Ascending aorta (tissue), 2 donors: ENCODE measurements at regions of chr7 and their contacts with region 1.

Region 1: GRCh38 chr7:159030490-159031134 is 114.1 kb downstream of the VIPR2 start:
- DNase-seq: peak in 1 of 2 donors; percentile 81
- H3K4me3 ChIP-seq: peak overlapping the region; percentile 59 to 78
- H3K27ac ChIP-seq: peak overlapping the region; percentile 94 to 96
- H3K4me1 ChIP-seq: peaks cover 0 to 18% of the 10 kb centered on the region in 2 donors
- H3K27me3 ChIP-seq: no peaks in the 10 kb centered on the region
- CTCF ChIP-seq: peak; percentile 48 to 54 (median 49)

Region 2: GRCh38 chr7:159015454-159016410 is 14.9 kb before region 1 on chr7:
- intact Hi-C with region 1: loop called (anchors 1 kb)
- DNase-seq: peak; percentile 25 to 93
- H3K4me3 ChIP-seq: no peak overlapping the region
- H3K27ac ChIP-seq: peak overlapping the region; percentile 91 to 96
- H3K4me1 ChIP-seq: peaks cover 11 to 59% of the 10 kb centered on the region in 2 donors
- H3K27me3 ChIP-seq: no peaks in the 10 kb centered on the region
- CTCF ChIP-seq: peak in 1 of 3 experiments; percentile 6

Region 3: DNA sequence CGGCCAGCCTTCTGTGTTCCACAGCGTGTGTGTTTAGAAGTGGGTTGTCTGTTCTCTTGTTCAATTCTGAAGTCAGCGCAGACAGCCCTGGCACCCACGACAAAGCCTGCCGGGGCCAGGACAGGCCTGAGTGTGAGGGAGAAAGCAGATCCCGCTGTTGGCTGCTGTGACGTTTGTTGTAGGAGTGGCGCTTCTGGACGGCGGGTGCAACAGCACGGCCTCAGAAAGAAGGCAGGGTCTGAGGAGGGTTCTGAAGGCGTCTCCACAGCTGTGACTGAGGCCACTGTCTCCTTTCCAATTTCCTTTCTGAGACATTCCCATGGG is 37.8 kb after region 1 on chr7:
- intact Hi-C with region 1: loop called (anchors 2 kb)
- DNase-seq: peak in 1 of 2 donors; percentile 81
- H3K4me3 ChIP-seq: peak overlapping the region in 1 of 2 donors; percentile 27
- H3K27ac ChIP-seq: peak overlapping the region; percentile 84 to 88
- H3K4me1 ChIP-seq: peaks cover 16 to 27% of the 10 kb centered on the region in 2 donors
- H3K27me3 ChIP-seq: no peaks in the 10 kb centered on the region
- CTCF ChIP-seq: no peak

Region 4: DNA sequence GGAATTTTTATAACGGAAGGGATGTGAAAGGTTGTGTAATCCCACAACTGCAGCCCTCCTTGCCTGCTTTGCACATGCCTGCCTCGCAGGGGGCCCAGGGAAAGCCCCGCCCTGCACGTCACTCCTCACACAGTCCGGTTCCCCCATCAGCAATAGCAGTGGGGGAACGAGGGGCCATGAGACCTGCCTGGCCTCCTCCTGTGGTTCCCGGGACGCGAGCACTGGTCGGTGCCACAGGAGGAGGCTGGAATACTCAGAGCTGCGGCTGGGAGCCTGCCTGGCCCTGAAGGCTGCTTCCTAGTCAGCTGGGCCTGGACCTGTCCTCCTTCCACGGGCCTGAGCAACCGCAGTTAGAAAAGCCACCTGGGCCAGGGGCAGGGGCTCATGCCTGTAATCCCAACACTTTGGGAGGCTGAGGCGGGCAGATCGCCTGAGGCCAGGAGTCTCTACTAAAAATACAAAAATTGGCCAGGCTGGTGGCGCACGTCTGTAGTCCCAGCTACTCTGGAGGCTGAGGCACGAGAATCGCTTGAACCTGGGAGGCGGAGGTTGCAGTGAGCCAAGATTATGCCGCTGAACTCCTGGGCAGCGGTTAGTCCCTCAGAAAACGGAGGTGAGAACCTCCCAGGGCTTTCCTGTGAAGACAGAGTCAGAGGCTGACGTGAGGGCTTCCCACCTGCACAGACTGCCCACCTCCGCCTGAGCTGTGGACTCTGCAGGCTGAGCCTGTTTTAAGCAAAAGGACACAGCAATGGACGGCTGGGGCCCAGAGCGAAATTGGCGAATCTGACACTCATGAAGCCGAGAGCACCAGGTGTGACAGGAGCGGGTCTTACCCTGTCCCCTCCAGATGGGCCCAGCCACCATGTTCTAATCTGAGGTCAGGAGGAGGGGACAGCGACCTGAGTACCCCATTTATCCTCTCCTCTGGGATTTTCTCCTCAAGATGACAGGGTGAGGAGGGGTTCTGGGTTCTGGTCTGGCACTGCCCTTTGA is 61.2 kb after region 1 on chr7:
- intact Hi-C with region 1: loop called (anchors 1 kb)
- DNase-seq: peak in 1 of 2 donors; percentile 66
- H3K4me3 ChIP-seq: no peak overlapping the region
- H3K27ac ChIP-seq: peak overlapping the region; percentile 98 to 99
- H3K4me1 ChIP-seq: peaks cover 28 to 48% of the 10 kb centered on the region in 2 donors
- H3K27me3 ChIP-seq: no peaks in the 10 kb centered on the region
- CTCF ChIP-seq: no peak

Region 5: DNA sequence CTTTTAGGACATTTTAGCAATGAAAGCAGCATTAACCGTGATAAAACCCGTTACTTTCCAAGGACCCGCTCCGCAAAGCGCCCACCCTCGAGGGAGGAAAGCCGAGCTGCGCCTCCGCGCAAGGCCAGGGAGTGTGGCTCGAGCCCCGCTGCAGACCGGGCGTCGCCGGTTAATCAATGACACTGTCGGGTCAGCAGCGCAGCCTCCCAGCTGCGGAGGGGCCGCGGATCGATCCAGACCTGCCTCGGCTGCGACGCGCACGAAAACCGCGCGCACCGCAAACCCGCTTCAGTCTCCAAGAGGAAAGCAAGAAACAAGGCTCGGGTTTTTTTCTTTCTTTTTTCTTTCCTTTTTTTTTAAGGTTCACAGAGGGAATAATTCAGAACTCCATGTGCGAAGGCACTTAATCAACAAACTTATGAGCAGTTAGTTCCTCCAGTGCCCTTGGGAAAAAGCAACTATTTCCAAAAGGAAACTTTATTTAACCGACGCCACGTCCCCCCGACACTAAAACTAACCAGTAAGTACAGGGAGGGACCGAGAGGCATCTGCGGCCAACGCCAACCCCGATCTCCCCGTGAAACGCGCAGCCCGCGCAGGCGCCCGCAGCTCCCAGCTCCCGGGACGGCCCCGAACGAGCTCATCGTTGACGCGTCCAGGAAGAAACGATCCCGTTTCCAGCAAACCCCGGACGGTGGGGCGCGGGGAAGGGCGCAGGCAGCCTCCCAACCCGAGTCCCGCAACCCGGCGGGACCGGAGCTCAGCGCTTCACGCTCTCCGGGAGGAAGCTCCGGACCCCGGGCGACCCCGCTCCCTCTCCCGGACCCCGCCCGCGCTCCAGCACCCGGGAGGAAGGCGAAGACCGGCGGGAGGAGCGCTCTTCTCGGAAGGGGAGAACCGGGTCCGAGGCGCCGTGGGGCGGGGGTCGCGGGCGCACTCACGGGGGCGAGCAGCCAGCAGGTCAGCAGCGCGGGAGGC is 113.5 kb after region 1 on chr7:
- intact Hi-C with region 1: loop called (anchors 5 kb)
- DNase-seq: no peak
- H3K4me3 ChIP-seq: peak overlapping the region; percentile 69 to 85
- H3K27ac ChIP-seq: peak overlapping the region; percentile 30 to 47
- H3K4me1 ChIP-seq: peaks cover 0 to 12% of the 10 kb centered on the region in 2 donors
- H3K27me3 ChIP-seq: no peaks in the 10 kb centered on the region
- CTCF ChIP-seq: no peak

Region 6: GRCh38 chr7:159211540-159212182 is 181.0 kb after region 1 on chr7:
- intact Hi-C with region 1: no loop called
- DNase-seq: no peak
- H3K4me3 ChIP-seq: peak overlapping the region; percentile 20 to 37
- H3K27ac ChIP-seq: peak overlapping the region; percentile 69
- H3K4me1 ChIP-seq: peaks cover 4 to 5% of the 10 kb centered on the region in 2 donors
- H3K27me3 ChIP-seq: no peaks in the 10 kb centered on the region
- CTCF ChIP-seq: no peak

Region 7: GRCh38 chr7:159310457-159311171 is 280.0 kb after region 1 on chr7:
- intact Hi-C with region 1: no loop called
- DNase-seq: no peak
- H3K4me3 ChIP-seq: no peak overlapping the region
- H3K27ac ChIP-seq: no peak overlapping the region
- H3K4me1 ChIP-seq: no peaks in the 10 kb centered on the region
- H3K27me3 ChIP-seq: no peaks in the 10 kb centered on the region
- CTCF ChIP-seq: no peak